Activated CD8-positive, alpha-beta memory T cell treated with anti-CD3 and anti-CD28 coated beads, Interleukin-2, amount 10 ng/mL, durations not matched to agents 7 days and 5 days (primary cell): ENCODE measurements at regions of chr1 and their contacts with region 1.

Region 1: DNA sequence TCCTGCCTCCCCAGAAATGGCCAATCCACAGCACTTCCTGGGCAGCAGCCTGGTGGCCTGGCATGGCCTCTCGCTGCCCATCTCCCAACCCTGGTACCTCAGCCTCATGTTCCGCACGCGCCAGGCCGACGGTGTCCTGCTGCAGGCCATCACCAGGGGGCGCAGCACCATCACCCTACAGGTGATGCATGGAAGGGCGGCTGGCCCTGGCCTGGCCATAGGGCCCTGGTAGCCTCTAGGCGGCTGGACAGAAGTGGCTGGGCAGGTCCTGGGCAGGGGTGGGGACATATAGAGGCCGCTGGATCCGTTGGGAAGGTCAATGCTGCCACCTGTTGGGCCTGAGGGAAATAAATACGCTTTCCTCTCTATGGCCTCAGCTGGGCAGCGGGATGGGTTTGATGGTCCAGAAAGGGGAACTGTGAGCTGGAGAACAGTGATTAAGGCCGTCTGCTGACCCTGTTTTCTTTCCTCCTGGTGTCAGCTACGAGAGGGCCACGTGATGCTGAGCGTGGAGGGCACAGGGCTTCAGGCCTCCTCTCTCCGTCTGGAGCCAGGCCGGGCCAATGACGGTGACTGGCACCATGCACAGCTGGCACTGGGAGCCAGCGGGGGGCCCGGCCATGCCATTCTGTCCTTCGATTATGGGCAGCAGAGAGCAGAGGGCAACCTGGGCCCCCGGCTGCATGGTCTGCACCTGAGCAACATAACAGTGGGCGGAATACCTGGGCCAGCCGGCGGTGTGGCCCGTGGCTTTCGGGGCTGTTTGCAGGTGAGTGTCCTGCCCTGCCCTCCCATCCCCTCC is 14.5 kb downstream of the CELSR2 start:
- DNase-seq: peak; percentile 83
- ATAC-seq: peak; percentile 95
- H3K4me3 Mint-ChIP-seq: no peak overlapping the region
- H3K27ac Mint-ChIP-seq: no peak overlapping the region
- H3K4me1 Mint-ChIP-seq: peaks cover 2% of the 10 kb centered on the region
- H3K27me3 Mint-ChIP-seq: no peaks in the 10 kb centered on the region

Region 2: GRCh38 chr1:109253484-109254141 is 10.2 kb before region 1 on chr1:
- CTCF ChIA-PET with region 1: interaction called, 15 read pairs
- DNase-seq: no peak
- ATAC-seq: no peak
- H3K4me3 Mint-ChIP-seq: no peak overlapping the region
- H3K27ac Mint-ChIP-seq: no peak overlapping the region
- H3K4me1 Mint-ChIP-seq: peaks cover 6% of the 10 kb centered on the region
- H3K27me3 Mint-ChIP-seq: peaks cover 10% of the 10 kb centered on the region

Region 3: DNA sequence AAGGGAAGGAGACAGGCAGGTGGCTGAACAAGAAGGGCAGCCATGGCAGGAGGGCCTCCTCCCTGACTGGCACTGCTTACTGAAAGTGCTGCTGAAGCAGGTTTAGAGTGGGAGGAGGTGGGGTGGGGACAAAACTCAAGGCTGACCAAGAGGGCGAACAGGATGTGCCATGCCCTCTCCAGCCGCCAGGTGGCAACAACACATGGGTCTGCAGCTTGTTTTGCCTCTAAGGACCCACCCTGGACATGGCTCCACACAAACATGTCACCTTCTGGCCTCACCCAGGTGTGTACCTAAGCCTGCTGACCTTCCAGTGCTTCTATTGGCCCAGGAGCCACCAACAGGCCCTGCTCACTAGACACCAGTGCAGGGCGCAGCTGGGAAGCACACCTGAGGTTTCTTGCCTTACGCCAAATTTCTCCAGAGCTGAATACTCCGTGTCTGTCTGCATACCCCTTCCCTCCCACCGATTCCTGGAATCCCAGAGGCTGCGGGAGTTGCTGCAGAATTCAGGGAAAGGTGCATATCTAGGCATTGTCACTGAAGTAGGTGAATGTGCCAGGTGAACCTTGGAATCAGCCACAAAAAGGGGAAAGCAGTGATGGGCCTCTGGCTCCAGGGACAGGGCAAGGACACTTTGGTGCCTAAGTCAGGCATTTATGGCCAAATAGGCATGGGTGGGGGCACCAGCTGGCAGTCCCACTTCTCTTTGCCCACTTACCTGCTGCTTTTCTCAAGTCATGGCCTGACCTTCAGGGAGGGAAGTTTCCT is 13.8 kb after region 1 on chr1:
- CTCF ChIA-PET with region 1: interaction called, 13 read pairs
- DNase-seq: peak; percentile 83
- ATAC-seq: peak; percentile 83
- H3K4me3 Mint-ChIP-seq: no peak overlapping the region
- H3K27ac Mint-ChIP-seq: peak overlapping the region; percentile 44
- H3K4me1 Mint-ChIP-seq: peaks cover 22% of the 10 kb centered on the region
- H3K27me3 Mint-ChIP-seq: no peaks in the 10 kb centered on the region

Region 4: DNA sequence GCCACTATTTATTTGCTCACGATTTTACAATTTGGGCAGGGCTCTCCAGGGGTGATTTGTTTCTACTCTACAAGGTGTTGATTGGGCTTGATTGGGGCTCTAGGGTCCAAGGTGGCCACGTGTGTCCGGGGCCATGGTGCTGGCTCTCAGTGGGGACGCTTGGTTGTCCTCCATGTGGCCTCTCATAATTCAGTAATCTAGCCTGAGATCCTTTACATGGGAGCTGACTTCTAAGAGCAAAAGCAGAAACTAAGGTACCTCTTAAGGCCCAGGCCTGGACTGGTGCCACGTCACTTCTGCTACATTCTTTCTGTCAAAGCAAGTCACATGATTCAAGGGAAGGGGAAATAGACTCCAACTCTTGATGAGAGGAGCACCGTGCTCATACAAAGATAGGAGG is 27.2 kb after region 1 on chr1:
- CTCF ChIA-PET with region 1: no interaction called
- DNase-seq: no peak
- ATAC-seq: no peak
- H3K4me3 Mint-ChIP-seq: no peak overlapping the region
- H3K27ac Mint-ChIP-seq: no peak overlapping the region
- H3K4me1 Mint-ChIP-seq: peaks cover 3% of the 10 kb centered on the region
- H3K27me3 Mint-ChIP-seq: peaks cover 32% of the 10 kb centered on the region

Region 5: GRCh38 chr1:109350655-109351054 is 86.9 kb after region 1 on chr1:
- CTCF ChIA-PET with region 1: no interaction called
- DNase-seq: no peak
- ATAC-seq: no peak
- H3K4me3 Mint-ChIP-seq: no peak overlapping the region
- H3K27ac Mint-ChIP-seq: no peak overlapping the region
- H3K4me1 Mint-ChIP-seq: peaks cover 28% of the 10 kb centered on the region
- H3K27me3 Mint-ChIP-seq: peaks cover 9% of the 10 kb centered on the region